Activated T-helper 1 cell treated with anti-CD3 and anti-CD28 coated beads, Interleukin-12 subunit alpha, Interleukin-12 subunit beta, Interleukin-2, Interleukin-4 antibody, amounts not matched to agents 30 ng/mL and 10 ng/mL and 1 ng/mL, durations not matched to agents 14 hours and 24 hours and 36 hours (primary cell): ENCODE measurements at regions of chr1 and their contacts with region 1.

Region 1: DNA sequence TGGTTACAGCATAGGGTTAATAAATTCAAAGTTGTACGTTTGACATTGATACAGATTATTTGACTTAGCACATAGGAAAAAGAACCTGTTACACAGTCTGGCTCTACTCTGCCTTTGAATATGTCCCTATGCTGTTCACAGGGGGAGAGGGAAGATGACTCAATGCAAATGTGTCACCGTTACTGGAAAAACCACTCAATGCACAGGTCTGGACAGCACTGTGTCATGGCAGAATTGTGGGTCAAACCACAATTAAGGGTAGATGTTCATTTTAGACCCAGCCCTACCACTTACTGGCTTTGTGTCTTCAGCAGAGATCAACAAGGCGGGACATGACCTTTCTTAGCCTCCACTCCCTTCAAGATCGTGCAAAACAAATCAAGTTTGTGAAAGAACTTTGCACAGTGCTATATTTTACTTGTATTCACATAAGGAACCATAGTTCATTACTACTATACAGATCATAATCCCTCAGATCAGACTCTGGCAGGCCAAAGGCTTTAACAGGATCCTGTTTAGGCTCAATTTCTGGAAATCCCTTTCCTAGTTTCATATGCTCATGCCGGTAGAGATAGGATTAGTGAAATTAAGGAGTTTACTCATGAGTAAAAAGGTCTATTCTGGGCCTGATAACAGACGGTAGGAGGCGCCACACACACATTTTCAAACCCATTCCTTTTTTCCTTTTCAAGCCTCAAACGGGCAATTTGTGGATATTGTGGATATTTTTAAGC is 22.1 kb downstream of the EIF2D start:
- DNase-seq: peak; percentile 70
- H3K4me3 Mint-ChIP-seq: peak overlapping the region; percentile 65
- H3K27ac Mint-ChIP-seq: peak overlapping the region; percentile 95
- H3K4me1 Mint-ChIP-seq: peaks cover 87% of the 10 kb centered on the region
- H3K27me3 Mint-ChIP-seq: no peaks in the 10 kb centered on the region

Region 2: DNA sequence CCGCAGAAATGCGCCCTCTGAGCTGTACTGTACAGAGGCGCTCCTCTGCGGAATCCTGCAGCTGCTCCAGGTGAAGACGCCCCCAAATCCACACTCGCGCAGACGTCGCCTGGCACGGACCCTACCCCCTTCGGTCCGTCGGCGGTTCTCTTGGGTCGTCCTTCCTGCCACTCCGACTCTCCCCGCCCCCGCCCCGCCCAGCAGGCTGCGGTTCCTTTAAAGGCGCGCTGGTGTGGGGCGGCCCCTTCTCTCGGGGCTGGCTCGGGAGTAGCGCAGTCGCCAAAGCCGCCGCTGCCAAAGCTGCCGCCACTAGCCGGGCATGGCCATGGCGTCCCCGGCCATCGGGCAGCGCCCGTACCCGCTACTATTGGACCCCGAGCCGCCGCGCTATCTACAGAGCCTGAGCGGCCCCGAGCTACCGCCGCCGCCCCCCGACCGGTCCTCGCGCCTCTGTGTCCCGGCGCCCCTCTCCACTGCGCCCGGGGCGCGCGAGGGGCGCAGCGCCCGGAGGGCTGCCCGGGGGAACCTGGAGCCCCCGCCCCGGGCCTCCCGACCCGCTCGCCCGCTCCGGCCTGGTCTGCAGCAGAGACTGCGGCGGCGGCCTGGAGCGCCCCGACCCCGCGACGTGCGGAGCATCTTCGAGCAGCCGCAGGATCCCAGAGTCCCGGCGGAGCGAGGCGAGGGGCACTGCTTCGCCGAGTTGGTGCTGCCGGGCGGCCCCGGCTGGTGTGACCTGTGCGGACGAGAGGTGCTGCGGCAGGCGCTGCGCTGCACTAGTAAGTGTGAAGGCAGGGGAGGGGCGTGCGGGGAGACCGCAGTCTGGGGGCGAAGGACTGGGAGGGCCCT is 82.7 kb before region 1 on chr1 and contains the start of gene RASSF5:
- intact Hi-C with region 1: loop called (anchors 2 kb)
- DNase-seq: peak; percentile 82
- H3K4me3 Mint-ChIP-seq: peak within 1 kb of the TSS; percentile 78
- H3K27ac Mint-ChIP-seq: peak within 1 kb of the TSS; percentile 47
- H3K4me1 Mint-ChIP-seq: peaks cover 54% of the 10 kb centered on the region
- H3K27me3 Mint-ChIP-seq: peaks cover 17% of the 10 kb centered on the region
- total RNA-seq, gene RASSF5: 220 and 221 TPM in 2 replicates

Region 3: DNA sequence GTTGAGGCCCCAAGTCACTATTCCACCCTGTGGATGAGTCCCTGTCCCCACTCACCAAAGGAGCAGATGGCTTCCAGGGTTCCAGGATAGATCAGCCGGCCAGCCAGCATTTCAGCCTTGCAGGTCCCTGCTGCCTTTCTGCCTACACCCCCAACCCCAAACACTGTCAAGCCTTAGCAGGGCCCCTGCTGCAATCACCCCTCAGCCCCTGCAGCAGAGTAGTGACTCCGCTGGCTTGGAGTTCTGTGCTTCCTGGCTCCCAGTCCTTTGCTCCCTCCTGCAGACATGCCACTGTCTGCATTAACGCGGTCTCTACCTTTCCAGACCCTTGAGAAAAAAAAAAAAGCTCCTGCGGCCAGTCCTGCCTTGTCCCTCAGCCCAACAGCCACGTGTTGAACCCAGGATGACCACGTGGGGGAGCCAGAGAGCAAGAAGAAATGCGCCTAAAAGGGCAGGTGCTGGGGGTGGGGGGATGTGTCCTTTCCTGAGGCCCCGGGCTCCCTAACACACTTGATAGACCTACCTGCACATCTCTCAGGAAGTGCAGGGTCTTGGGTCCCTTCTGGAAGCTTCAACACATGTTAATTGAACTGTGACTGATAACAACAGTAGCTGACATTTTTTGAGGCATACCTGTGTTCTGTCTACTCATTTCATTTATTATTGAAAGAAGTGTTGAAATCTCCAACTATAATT is 45.5 kb before region 1 on chr1:
- intact Hi-C with region 1: loop called (anchors 2 kb)
- DNase-seq: peak; percentile 69
- H3K4me3 Mint-ChIP-seq: no peak overlapping the region
- H3K27ac Mint-ChIP-seq: peak overlapping the region; percentile 22
- H3K4me1 Mint-ChIP-seq: peaks cover 33% of the 10 kb centered on the region
- H3K27me3 Mint-ChIP-seq: peaks cover 2% of the 10 kb centered on the region